Activated T-helper 1 cell treated with anti-CD3 and anti-CD28 coated beads, Interleukin-12 subunit alpha, Interleukin-12 subunit beta, Interleukin-2, Interleukin-4 antibody, amounts not matched to agents 30 ng/mL and 10 ng/mL and 1 ng/mL, durations not matched to agents 14 hours and 24 hours and 36 hours (primary cell): ENCODE measurements at regions of chr16 and their contacts with region 1.

Region 1: DNA sequence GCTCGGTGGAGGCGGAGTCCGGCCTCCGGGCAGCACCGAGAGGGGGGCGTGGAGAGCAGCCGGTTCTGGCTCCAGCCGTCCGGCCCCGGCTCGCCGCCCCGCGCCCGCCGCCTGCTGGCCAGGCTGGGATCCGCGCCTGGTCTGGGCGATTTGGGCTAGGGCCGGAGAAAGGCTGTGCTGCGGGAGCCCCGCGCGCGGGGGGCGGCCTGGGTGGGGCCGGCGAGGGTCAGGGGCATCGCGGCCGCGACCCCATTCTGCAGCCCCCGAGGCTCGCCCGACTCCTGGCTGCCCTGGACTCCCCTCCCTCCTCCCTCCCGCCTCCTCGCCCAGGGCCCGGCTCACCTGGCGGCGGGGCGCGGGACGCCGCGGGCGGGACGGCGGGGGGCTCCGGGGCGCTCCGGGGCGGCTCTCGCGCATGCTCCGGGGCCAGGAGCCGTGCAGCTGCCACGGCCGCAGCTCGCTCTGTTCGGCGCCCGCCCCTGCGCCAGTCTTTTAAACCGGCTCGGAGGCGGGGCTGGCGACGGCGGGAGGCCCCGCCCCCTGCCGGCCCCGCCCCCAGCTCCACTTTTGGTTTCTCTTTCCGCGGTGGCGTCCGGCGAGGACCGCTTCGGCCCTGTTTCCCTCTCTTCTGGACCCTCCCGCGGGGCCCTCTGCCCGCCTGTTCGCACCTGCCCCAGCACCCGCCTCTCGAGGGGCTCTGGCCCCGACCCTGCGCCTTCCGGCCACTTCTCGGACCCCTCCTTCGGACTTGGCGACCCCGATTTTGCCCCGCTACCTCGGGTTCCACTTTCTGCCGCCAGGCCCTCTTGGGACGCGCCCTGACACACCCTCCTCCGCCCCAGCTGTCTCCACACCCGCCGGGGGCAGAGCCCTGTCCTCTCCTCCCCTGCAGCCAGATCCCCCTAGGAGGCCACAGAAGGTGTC is at the start of gene SOCS1:
- DNase-seq: peak; percentile 90
- H3K4me3 Mint-ChIP-seq: peak within 1 kb of the TSS; percentile 99
- H3K27ac Mint-ChIP-seq: peak within 1 kb of the TSS; percentile 90
- H3K4me1 Mint-ChIP-seq: peaks cover 51% of the 10 kb centered on the region
- H3K27me3 Mint-ChIP-seq: peaks cover 8% of the 10 kb centered on the region
- total RNA-seq, gene SOCS1: 158 and 161 TPM in 2 replicates

Region 2: GRCh38 chr16:10743610-10744393 is 512.2 kb before region 1 on chr16 and contains the start of gene NUBP1:
- intact Hi-C with region 1: loop called (anchors 10 kb)
- DNase-seq: peak; percentile 97
- H3K4me3 Mint-ChIP-seq: peak within 1 kb of the TSS; percentile 87
- H3K27ac Mint-ChIP-seq: peak within 1 kb of the TSS; percentile 93
- H3K4me1 Mint-ChIP-seq: peaks cover 57% of the 10 kb centered on the region
- H3K27me3 Mint-ChIP-seq: no peaks in the 10 kb centered on the region
- total RNA-seq, gene NUBP1: 39.8 and 42.4 TPM in 2 replicates

Region 3: GRCh38 chr16:10817963-10818941 is 437.7 kb before region 1 on chr16 and contains the start of gene TVP23A:
- intact Hi-C with region 1: no loop called
- DNase-seq: no peak
- H3K4me3 Mint-ChIP-seq: no peak within 1 kb of the TSS
- H3K27ac Mint-ChIP-seq: no peak within 1 kb of the TSS
- H3K4me1 Mint-ChIP-seq: peaks cover 18% of the 10 kb centered on the region
- H3K27me3 Mint-ChIP-seq: peaks cover 7% of the 10 kb centered on the region
- total RNA-seq, gene TVP23A: not detected in 2 replicates

Region 4: DNA sequence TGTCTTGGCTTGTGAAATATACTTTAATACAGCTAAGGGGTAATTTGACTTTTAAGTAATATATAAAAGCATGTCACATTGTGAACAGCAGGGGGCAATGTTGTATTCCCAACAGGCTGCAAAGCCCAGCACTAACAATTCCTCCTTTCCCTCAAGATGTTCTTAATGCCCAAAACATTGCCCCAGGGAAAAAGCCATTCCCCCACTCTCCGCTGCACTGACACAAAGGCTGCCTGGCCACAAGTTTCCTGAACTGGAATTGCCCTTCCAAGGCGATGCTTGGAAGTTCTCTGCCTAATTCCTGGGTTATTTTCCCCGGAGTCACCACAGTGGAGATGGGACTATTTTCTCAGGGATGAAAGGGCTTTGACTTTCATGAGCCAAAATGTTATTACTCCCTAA is 284.4 kb before region 1 on chr16:
- intact Hi-C with region 1: loop called (anchors 1 kb)
- DNase-seq: peak; percentile 28
- H3K4me3 Mint-ChIP-seq: peak overlapping the region; percentile 41
- H3K27ac Mint-ChIP-seq: peak overlapping the region; percentile 70
- H3K4me1 Mint-ChIP-seq: peaks cover 68% of the 10 kb centered on the region
- H3K27me3 Mint-ChIP-seq: no peaks in the 10 kb centered on the region

Region 5: DNA sequence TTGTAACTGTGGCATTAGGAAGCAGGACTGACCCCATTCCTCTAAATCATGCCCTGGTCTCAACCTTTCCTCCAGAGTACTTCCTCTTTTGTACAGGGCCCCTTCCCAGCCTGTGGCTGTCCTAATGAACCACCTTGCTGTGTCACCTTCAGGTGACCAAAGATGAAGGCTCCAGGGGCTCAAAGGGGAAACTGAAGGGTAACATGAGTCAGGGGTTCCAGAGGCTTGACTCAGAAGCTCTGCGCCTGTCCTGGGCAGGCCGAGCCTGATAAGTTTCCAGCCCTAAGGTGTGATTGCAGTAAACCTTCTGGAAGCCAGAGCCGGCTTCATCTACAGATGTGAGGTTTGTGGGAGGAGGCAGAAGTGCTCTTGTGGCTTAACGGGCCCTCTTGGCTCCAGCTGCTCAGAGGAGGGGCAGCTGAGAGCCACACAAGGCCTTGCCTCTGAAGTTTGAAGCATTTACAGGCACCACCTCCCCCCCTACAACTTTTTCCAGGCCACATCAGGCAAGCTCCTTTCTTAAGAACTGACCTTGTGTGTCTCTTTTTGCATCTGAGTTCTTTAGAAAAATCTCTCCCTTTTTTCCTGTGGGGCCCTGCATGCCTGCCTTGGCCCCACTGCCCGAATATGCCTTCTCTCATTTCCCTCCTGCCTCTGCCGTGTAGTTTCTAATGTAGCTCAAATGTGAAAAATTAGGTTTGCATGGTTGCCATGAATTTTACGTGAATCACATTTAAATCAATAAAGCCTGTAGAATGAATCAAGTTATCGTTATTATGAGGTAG is 161.7 kb before region 1 on chr16:
- intact Hi-C with region 1: loop called (anchors 1 kb)
- DNase-seq: peak; percentile 56
- H3K4me3 Mint-ChIP-seq: peak overlapping the region; percentile 68
- H3K27ac Mint-ChIP-seq: peak overlapping the region; percentile 100
- H3K4me1 Mint-ChIP-seq: peaks cover 70% of the 10 kb centered on the region
- H3K27me3 Mint-ChIP-seq: no peaks in the 10 kb centered on the region

Region 6: GRCh38 chr16:11224096-11224893 is 31.7 kb before region 1 on chr16:
- intact Hi-C with region 1: loop called (anchors 1 kb)
- DNase-seq: peak; percentile 66
- H3K4me3 Mint-ChIP-seq: peak overlapping the region; percentile 80
- H3K27ac Mint-ChIP-seq: peak overlapping the region; percentile 98
- H3K4me1 Mint-ChIP-seq: peaks cover 58% of the 10 kb centered on the region
- H3K27me3 Mint-ChIP-seq: no peaks in the 10 kb centered on the region

Region 7: DNA sequence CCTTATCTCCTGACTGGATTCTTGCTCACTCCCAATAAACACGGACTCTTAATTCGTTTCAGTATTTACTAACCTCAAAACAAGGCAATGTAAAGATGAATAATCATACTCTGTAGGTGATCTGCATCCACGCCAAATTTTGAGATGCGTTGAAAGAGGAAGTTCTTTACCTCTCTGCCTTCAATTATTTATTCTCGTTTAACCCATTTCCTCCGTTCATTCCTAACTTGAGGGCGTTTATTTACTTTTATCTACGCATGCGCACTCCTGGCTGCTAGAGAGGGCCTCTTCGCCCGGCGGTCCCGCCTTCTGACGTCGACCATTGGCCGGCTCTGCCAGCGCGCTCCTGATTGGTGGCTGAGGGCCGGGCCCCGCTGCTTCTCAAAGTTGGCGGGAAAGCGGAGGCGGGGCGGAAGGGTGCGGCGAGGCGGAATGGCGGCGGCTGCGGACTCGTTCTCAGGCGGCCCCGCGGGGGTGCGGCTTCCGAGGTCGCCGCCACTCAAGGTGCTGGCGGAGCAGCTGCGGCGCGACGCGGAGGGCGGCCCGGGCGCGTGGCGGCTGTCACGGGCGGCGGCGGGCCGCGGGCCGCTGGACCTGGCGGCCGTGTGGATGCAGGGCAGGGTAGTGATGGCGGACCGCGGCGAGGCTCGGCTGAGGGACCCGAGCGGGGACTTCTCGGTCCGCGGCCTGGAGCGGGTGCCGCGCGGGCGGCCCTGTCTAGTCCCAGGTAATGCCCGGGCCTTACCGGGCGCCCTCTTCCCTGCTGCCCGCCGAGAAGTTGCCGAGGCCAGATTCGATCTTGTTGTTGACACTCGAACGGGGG is 89.3 kb after region 1 on chr16 and contains the start of gene RMI2:
- intact Hi-C with region 1: loop called (anchors 1 kb)
- DNase-seq: peak; percentile 97
- H3K4me3 Mint-ChIP-seq: peak within 1 kb of the TSS; percentile 93
- H3K27ac Mint-ChIP-seq: peak within 1 kb of the TSS; percentile 83
- H3K4me1 Mint-ChIP-seq: peaks cover 58% of the 10 kb centered on the region
- H3K27me3 Mint-ChIP-seq: peaks cover 4% of the 10 kb centered on the region
- total RNA-seq, gene RMI2: 49.8 and 55.7 TPM in 2 replicates

Region 8: DNA sequence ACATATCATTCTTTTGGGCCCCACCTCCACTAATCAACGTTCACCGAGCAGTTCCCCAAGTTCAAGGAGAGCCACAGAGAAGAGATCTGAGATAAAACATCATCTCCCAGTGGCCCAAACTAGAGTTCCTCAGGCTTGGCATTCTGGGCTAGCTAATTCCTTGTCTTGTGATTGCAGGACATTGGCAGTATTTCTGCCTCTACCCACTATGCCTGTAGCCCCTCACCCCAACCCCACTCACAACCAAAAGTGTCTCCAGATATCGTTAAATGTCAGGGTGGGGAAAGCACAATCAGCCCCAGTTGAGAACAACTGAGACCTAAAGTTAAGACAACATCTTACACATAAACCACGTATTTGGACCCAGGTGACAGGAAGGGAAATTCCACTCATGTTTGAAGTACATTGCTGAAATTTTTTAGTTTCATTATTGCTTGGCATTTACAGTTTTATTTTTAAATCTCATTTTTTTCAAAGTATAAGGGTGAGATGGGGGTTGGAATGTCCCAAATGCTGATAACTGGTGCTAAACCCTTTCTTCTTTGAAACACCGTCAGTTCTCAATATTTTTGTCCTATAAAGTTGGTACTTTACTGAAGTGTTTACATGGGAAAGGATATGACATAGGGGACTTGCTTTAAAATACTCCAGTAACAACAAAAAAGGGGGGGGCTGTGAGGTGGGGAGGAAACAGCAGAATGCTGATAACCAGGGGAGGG is 527.5 kb after region 1 on chr16:
- intact Hi-C with region 1: loop called (anchors 10 kb)
- DNase-seq: peak; percentile 67
- H3K4me3 Mint-ChIP-seq: peak overlapping the region; percentile 83
- H3K27ac Mint-ChIP-seq: peak overlapping the region; percentile 98
- H3K4me1 Mint-ChIP-seq: peaks cover 64% of the 10 kb centered on the region
- H3K27me3 Mint-ChIP-seq: no peaks in the 10 kb centered on the region